GM10248 (cell line): ENCODE measurements at regions of chr5 and their contacts with region 1.

Region 1: GRCh38 chr5:141681695-141682641 is at the start of gene ARAP3:
- DNase-seq: no peak
- CTCF ChIP-seq: no peak

Region 2: GRCh38 chr5:141664732-141665461 is 17.1 kb before region 1 on chr5:
- CTCF ChIA-PET with region 1: interaction called, 14 read pairs
- POLR2A ChIA-PET with region 1: no interaction called
- DNase-seq: peak; percentile 88
- CTCF ChIP-seq: peak; percentile 86